Activated naive CD4-positive, alpha-beta T cell treated with anti-CD3 and anti-CD28 coated beads, Interleukin-2, amount 10 ng/mL, durations not matched to agents 7 days and 5 days (primary cell): ENCODE measurements at regions of chr1 and their contacts with region 1.

Region 1: DNA sequence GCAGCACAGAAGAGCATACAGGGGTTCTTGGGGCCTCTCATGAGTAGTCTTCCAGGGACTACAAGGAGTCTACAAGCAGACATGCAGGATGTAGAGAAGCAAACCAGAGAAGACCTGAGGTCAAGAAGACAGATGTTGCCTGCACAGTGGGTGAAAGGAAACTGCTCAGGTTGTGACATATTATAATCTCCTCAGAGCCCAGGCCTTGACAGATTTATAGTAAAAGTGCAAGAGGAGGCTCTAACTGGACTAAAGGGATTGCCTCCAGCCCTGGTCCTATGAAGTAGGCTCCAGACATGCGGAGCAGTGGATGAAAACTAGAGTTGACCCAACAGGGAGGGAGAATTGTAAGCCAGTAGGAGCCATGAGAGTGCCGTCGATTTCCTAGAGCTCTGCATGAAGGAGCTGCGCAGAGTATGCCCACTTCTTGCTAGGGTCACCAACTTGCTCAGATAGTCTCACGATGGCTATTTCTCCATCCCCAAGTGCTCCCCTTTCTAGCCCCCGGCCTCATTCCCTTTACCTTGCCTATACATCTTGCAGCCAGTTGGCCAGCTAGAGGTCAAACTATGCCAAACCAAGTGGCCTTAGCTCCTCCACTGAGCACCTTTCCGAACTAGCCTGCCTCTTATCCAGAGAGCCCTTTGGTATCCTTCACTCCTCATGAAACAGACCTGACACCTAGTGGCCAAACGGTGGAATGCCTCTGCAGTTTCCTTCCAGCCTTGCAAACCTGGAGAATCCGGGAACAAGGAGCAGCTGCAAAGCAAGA is 36.2 kb upstream of the IPO9 start:
- DNase-seq: peak; percentile 64
- H3K4me3 Mint-ChIP-seq: no peak overlapping the region
- H3K27ac Mint-ChIP-seq: no peak overlapping the region
- H3K4me1 Mint-ChIP-seq: peaks cover 24% of the 10 kb centered on the region
- H3K27me3 Mint-ChIP-seq: peaks cover 11% of the 10 kb centered on the region

Region 2: DNA sequence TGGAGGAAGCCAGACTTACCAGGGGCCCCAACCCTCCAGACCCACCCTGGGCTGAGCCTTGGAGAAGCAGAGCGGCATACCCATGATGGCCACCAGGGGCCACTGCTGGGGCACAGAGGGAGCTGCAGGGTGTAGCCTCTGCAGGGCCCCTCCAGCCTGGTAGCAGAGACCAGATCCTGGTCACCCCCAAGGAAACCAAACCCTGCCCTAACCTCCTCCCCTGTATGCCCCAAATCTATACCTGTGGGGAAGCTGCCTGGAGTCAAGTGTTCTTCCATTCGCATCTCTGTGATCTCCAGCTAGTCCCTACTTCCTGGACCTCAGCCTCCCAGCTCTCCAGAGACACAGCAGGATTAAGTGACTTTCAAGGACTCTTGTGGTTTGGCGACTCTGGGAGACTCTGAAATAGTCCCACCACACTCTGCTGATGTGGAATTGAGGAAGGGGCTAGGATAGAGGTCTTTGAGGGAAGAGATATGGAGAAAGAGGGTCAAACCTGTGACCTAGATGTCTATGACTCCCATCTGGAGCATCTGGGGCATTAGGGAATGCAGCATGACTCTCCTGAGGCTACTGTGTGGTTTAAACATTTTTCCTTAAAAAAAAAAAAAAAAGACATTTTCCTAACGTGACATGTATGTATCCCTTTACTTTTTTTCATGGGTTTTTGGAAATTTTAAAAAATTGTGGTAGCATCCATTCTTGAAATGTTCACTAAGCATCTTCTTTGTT is 83.0 kb before region 1 on chr1:
- CTCF ChIA-PET with region 1: interaction called, 250 read pairs
- DNase-seq: peak; percentile 69
- H3K4me3 Mint-ChIP-seq: no peak overlapping the region
- H3K27ac Mint-ChIP-seq: no peak overlapping the region
- H3K4me1 Mint-ChIP-seq: no peaks in the 10 kb centered on the region
- H3K27me3 Mint-ChIP-seq: peaks cover 23% of the 10 kb centered on the region

Region 3: DNA sequence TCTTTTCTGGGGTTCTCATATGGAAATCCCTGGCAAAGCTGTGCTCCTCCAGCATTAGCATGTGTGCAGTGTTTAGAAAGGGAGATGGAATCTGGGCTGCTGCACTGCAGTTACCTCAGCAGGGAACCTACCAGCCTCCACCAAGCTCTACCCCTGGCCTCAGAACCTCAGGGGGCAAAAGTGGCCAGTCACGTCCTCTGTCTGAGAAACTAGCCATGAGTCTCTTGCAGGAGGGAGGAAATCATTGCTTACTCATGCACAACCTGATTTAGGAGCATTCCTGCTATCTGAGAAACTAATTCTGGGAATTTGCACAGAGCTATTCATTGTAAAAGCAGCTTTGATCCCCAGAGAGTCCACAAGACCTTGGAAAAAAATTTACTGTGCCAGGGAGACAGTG is 44.4 kb before region 1 on chr1:
- CTCF ChIA-PET with region 1: no interaction called
- DNase-seq: no peak
- H3K4me3 Mint-ChIP-seq: no peak overlapping the region
- H3K27ac Mint-ChIP-seq: no peak overlapping the region
- H3K4me1 Mint-ChIP-seq: peaks cover 10% of the 10 kb centered on the region
- H3K27me3 Mint-ChIP-seq: peaks cover 15% of the 10 kb centered on the region

Region 4: DNA sequence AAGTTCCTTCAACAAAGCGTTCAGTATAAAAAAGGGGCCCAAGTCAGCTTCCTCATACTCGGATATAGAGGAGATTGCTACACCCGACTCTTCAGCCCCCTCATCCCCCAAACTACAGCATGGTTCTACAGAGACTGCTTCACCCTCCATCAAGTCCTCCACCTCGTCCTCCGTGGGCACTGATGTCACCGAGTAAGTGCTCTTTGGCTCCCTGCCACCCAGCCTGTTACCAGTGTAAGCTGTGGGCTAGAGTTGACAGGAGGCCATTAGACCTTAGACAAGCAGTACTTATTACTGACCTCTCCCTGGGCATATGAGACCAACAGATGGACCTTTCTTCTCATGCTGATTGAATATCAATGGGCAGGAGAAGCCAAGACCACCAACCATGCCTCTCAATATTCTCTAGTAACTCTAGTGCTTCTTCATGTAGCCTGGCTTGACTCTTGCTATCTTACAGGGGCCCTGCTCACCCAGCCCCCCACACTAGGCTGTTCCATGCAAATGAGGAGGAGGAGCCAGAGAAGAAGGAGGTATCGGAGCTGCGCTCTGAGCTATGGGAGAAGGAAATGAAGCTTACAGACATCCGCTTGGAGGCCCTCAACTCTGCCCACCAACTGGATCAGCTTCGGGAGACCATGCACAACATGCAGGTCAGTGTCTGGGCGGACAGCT is 15.4 kb after region 1 on chr1:
- CTCF ChIA-PET with region 1: interaction called, 21 read pairs
- DNase-seq: no peak
- H3K4me3 Mint-ChIP-seq: no peak overlapping the region
- H3K27ac Mint-ChIP-seq: no peak overlapping the region
- H3K4me1 Mint-ChIP-seq: no peaks in the 10 kb centered on the region
- H3K27me3 Mint-ChIP-seq: no peaks in the 10 kb centered on the region